ENCODE measurements at regions of chr2 and their contacts with region 1.

Region 1: GRCh38 chr2:61538200-61538919 is at the start of gene XPO1:
- DNase-seq: peak; percentile 100
- ATAC-seq: peak; percentile 77
- H3K4me3 ChIP-seq: peak within 1 kb of the TSS; percentile 69 to 88 (median 73)
- H3K4me3 Mint-ChIP-seq: peak within 1 kb of the TSS; percentile 99
- H3K27ac ChIP-seq: peak within 1 kb of the TSS; percentile 99 to 100
- H3K27ac Mint-ChIP-seq: peak within 1 kb of the TSS; percentile 100
- H3K4me1 ChIP-seq: peaks cover 22 to 26% of the 10 kb centered on the region in 2 donors
- H3K4me1 Mint-ChIP-seq: peaks cover 37% of the 10 kb centered on the region
- H3K27me3 ChIP-seq: no peaks in the 10 kb centered on the region
- H3K27me3 Mint-ChIP-seq: no peaks in the 10 kb centered on the region
- CTCF ChIP-seq: no peak
- total RNA-seq, gene XPO1: 208 and 219 TPM in 2 replicates

Region 2: DNA sequence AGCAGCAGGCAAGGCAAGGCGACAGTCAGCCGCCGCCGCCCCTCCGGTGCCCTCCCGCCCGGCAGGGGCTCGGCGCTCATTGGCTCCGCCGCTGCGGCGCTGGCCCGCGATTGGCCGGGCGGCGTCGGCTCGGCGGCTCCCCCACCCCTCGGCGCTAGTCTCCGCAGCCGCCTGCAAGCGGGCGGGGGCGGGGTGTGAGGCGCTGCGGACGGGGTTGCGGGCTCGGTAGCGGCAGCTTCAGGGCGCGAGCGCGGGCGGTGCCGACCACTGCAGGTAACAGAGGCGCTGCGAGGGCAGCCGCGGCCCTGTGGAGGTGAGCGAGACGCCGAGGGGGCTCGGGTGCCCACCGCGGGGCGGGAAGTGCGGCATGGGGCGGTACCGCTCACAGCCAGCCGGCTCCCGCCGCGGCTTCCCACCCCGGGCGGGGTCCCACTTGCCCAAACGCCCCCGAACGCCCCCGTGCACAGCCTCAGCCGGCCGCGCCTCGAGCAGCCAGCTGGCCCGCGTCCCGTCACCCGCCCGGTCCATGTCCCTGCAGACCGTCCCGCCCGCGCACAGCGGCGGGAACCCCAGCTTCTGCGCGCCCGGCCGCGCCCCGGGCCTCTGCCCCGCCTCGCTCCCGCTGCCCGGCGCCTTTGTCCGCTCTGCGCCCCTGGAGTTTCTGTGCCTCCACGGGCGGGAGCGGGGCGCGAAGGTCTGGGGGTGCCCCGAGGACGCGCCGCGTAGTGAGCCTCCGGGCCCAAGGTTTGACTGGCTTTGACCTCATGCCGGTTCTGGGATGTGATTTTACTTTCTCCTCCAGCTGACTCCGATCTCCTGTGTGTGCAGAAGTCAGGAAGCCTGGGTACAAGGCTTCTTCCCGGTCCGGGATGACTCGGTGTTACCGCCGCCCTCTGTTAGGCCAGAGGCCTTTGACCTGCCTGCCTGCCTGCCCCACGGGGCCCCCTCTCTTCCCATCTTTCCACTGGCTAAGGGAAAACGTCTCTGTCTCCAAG is 472.3 kb before region 1 on chr2 and contains the start of gene SANBR:
- CTCF ChIA-PET with region 1: no interaction called
- POLR2A ChIA-PET with region 1: no interaction called
- intact Hi-C with region 1: loop called (anchors 5 kb)
- DNase-seq: peak; percentile 89
- ATAC-seq: peak; percentile 98
- H3K4me3 ChIP-seq: peak within 1 kb of the TSS; percentile 45 to 81 (median 70)
- H3K4me3 Mint-ChIP-seq: peak within 1 kb of the TSS; percentile 96
- H3K27ac ChIP-seq: peak within 1 kb of the TSS in 1 of 2 donors; percentile 24
- H3K27ac Mint-ChIP-seq: peak within 1 kb of the TSS; percentile 89
- H3K4me1 ChIP-seq: peaks cover 12 to 17% of the 10 kb centered on the region in 2 donors
- H3K4me1 Mint-ChIP-seq: peaks cover 13% of the 10 kb centered on the region
- H3K27me3 ChIP-seq: no peaks in the 10 kb centered on the region
- H3K27me3 Mint-ChIP-seq: no peaks in the 10 kb centered on the region
- CTCF ChIP-seq: no peak
- total RNA-seq, gene SANBR: 6.6 and 7.4 TPM in 2 replicates

Region 3: DNA sequence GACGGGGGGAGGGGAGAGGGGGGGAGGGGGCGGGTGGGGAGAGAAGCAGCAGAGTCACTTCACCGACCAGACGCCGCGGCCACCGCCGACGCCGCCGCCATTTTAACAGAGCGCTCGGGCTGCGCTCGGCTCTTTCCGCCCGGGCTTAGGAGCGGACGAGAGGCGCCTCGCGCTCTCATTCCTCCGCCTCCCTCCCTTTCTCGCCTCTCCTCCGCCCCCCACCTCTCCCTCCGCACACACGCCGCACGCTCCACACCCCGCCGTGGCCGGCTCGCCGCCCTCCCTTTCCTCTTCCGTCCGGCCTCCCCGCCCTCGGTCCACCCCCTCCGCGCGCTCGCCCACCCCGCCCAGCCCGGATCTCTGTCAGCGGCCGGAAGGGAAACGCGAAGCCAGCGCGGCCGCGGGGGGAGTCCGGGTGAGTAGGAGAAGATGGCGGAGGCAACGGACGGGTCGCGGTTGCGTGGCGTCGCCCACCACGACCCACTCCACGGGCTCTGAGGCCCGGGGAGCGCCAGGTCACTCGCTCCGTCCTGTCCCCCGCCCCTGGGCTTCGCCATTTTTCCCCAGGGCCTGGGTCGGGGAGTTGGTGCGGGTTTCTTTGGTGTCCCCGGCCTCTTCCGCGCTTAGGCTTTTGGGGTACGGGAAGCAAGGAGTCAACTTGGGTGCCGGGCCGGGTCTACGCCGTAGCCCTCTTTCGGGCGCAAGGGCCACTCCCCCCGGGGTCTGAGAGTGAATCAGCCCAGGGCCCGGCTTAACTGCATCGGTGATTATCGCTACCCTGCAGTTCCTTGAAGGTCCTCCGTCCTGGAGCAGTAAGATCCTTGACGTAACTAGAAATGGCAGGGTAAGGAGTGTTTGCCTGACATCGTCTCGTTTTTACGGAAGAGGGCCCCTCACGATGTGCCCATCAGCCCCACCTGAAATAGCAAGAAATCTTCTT is 67.1 kb before region 1 on chr2 and contains the start of gene USP34:
- CTCF ChIA-PET with region 1: interaction called, 3 read pairs
- POLR2A ChIA-PET with region 1: interaction called, 8 read pairs
- intact Hi-C with region 1: loop called (anchors 1 kb)
- DNase-seq: peak; percentile 96
- ATAC-seq: peak; percentile 79
- H3K4me3 ChIP-seq: peak within 1 kb of the TSS; percentile 69 to 95 (median 85)
- H3K4me3 Mint-ChIP-seq: peak within 1 kb of the TSS; percentile 93
- H3K27ac ChIP-seq: peak within 1 kb of the TSS; percentile 96 to 99
- H3K27ac Mint-ChIP-seq: peak within 1 kb of the TSS; percentile 96
- H3K4me1 ChIP-seq: peaks cover 24% of the 10 kb centered on the region in 2 donors
- H3K4me1 Mint-ChIP-seq: peaks cover 29% of the 10 kb centered on the region
- H3K27me3 ChIP-seq: no peaks in the 10 kb centered on the region
- H3K27me3 Mint-ChIP-seq: no peaks in the 10 kb centered on the region
- CTCF ChIP-seq: no peak
- total RNA-seq, gene USP34: 311 and 320 TPM in 2 replicates

Region 4: DNA sequence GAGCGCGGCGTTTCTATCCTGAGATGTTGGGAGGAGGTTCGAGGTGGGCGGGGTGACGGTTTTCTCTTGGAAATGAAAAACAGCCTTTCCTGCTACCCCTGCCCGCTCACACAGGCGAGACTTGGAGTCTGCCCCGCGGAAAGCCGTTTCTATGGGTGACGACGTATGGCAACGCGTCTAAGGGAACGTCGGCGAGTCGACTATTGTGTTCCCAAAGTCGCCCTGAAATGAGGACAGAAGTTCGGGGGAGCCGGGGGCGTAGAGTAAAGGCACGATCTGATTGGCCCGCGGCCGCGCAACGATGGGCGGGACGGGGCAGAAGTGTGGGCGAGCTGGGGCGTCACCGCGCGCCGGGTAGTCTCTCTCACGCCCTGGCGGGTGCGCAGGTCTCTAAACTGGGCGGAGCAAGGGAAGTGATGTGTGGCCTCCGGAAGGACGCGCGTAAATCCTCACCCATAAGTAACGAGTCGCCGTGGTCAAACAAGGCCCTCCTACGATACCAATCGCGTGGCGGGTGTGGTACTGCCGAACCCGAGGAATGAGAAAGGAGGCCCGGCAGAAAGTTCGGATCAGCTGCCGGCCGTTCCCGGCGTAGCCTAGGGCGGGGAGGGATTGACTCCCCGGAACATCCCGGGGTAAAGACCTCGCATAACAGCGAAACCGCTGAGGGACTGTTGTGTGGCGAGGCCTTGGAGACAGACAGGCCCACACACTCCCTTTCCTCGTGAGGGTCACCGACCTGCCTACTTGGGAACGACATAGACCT is 225.9 kb after region 1 on chr2:
- CTCF ChIA-PET with region 1: no interaction called
- POLR2A ChIA-PET with region 1: interaction called, 5 read pairs
- intact Hi-C with region 1: loop called (anchors 1 kb)
- DNase-seq: peak; percentile 98
- ATAC-seq: peak; percentile 98
- H3K4me3 ChIP-seq: peak overlapping the region; percentile 89 to 94 (median 92)
- H3K4me3 Mint-ChIP-seq: peak overlapping the region; percentile 90
- H3K27ac ChIP-seq: peak overlapping the region; percentile 96 to 98
- H3K27ac Mint-ChIP-seq: peak overlapping the region; percentile 96
- H3K4me1 ChIP-seq: peaks cover 4 to 10% of the 10 kb centered on the region in 2 donors
- H3K4me1 Mint-ChIP-seq: peaks cover 14% of the 10 kb centered on the region
- H3K27me3 ChIP-seq: no peaks in the 10 kb centered on the region
- H3K27me3 Mint-ChIP-seq: peaks cover 2% of the 10 kb centered on the region
- CTCF ChIP-seq: no peak

Region 5: GRCh38 chr2:61888267-61889055 is 350.1 kb after region 1 on chr2 and contains the start of gene CCT4:
- CTCF ChIA-PET with region 1: no interaction called
- POLR2A ChIA-PET with region 1: interaction called, 4 read pairs
- intact Hi-C with region 1: loop called (anchors 10 kb)
- DNase-seq: peak; percentile 98
- ATAC-seq: peak; percentile 85
- H3K4me3 ChIP-seq: peak within 1 kb of the TSS; percentile 79 to 92 (median 89)
- H3K4me3 Mint-ChIP-seq: peak within 1 kb of the TSS; percentile 100
- H3K27ac ChIP-seq: peak within 1 kb of the TSS; percentile 95 to 96
- H3K27ac Mint-ChIP-seq: peak within 1 kb of the TSS; percentile 100
- H3K4me1 ChIP-seq: peaks cover 11 to 25% of the 10 kb centered on the region in 2 donors
- H3K4me1 Mint-ChIP-seq: peaks cover 32% of the 10 kb centered on the region
- H3K27me3 ChIP-seq: no peaks in the 10 kb centered on the region
- H3K27me3 Mint-ChIP-seq: no peaks in the 10 kb centered on the region
- CTCF ChIP-seq: no peak
- total RNA-seq, gene CCT4: 86.4 and 88.0 TPM in 2 replicates

Measured in B cell (primary cell).